Activated CD4-positive, alpha-beta T cell treated with anti-CD3 and anti-CD28 coated beads for 36 hours (primary cell): ENCODE measurements at regions of chr3 and their contacts with region 1.

Region 1: GRCh38 chr3:128969993-128970739 is 23.7 kb downstream of the CFAP92 start:
- DNase-seq: peak; percentile 80
- ATAC-seq: peak; percentile 74
- H3K4me3 Mint-ChIP-seq: no peak overlapping the region
- H3K27ac Mint-ChIP-seq: no peak overlapping the region
- H3K4me1 Mint-ChIP-seq: peaks cover 3% of the 10 kb centered on the region
- H3K27me3 Mint-ChIP-seq: no peaks in the 10 kb centered on the region

Region 2: GRCh38 chr3:127738192-127738840 is 1231.8 kb before region 1 on chr3:
- CTCF ChIA-PET with region 1: no interaction called
- POLR2A ChIA-PET with region 1: no interaction called
- intact Hi-C with region 1: no loop called
- DNase-seq: no peak
- ATAC-seq: no peak
- H3K4me3 Mint-ChIP-seq: no peak overlapping the region
- H3K27ac Mint-ChIP-seq: no peak overlapping the region
- H3K4me1 Mint-ChIP-seq: no peaks in the 10 kb centered on the region
- H3K27me3 Mint-ChIP-seq: peaks cover 4% of the 10 kb centered on the region

Region 3: DNA sequence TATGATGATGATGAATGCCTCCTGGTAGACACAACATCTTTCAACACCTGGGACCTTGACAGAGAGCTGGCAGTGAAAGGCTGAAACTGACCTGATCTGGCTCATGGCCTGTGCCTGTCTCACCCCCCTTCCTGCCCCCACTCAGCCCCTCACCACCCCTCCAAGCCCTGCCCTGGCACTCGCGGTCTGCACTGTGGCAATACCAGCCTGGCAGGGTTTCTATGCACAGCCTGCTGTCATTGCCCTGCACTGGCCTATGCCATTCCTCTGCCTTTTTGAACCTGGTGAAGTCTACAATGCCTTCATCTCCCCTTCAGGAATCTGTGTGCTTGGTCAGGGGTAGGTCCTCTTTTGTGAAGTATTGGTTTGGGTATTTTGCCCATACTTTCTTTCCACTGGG is 34.2 kb before region 1 on chr3:
- CTCF ChIA-PET with region 1: interaction called, 10 read pairs
- POLR2A ChIA-PET with region 1: no interaction called
- intact Hi-C with region 1: no loop called
- DNase-seq: no peak
- ATAC-seq: no peak
- H3K4me3 Mint-ChIP-seq: no peak overlapping the region
- H3K27ac Mint-ChIP-seq: no peak overlapping the region
- H3K4me1 Mint-ChIP-seq: no peaks in the 10 kb centered on the region
- H3K27me3 Mint-ChIP-seq: no peaks in the 10 kb centered on the region

Region 4: DNA sequence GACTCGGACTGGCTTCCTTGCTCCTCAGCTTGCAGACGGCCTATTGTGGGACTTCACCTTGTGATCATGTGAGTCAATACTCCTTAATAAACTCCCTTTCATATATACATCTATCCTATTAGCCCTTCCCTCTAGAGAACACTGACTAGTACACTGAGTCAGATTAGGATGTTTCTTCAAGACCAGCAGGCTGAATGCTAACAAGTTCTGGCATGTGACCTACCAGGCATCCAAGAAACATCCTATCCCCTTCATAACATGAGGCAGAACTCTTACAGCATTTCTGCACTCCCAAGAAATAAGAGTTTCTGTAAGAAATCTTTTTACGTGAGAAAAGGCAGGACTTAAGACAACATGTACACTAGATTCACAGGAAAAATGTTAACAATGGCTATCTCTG is 14.4 kb after region 1 on chr3:
- CTCF ChIA-PET with region 1: interaction called, 22 read pairs
- POLR2A ChIA-PET with region 1: no interaction called
- intact Hi-C with region 1: no loop called
- DNase-seq: no peak
- ATAC-seq: no peak
- H3K4me3 Mint-ChIP-seq: no peak overlapping the region
- H3K27ac Mint-ChIP-seq: no peak overlapping the region
- H3K4me1 Mint-ChIP-seq: no peaks in the 10 kb centered on the region
- H3K27me3 Mint-ChIP-seq: no peaks in the 10 kb centered on the region

Region 5: GRCh38 chr3:129003578-129004160 is 33.5 kb after region 1 on chr3:
- CTCF ChIA-PET with region 1: interaction called, 17 read pairs
- POLR2A ChIA-PET with region 1: no interaction called
- intact Hi-C with region 1: no loop called
- DNase-seq: peak; percentile 77
- ATAC-seq: peak; percentile 74
- H3K4me3 Mint-ChIP-seq: peak overlapping the region; percentile 52
- H3K27ac Mint-ChIP-seq: no peak overlapping the region
- H3K4me1 Mint-ChIP-seq: peaks cover 36% of the 10 kb centered on the region
- H3K27me3 Mint-ChIP-seq: peaks cover 27% of the 10 kb centered on the region

Region 6: GRCh38 chr3:129026728-129027543 is 56.8 kb after region 1 on chr3:
- CTCF ChIA-PET with region 1: interaction called, 20 read pairs
- POLR2A ChIA-PET with region 1: no interaction called
- intact Hi-C with region 1: no loop called
- DNase-seq: peak; percentile 96
- ATAC-seq: peak; percentile 100
- H3K4me3 Mint-ChIP-seq: peak overlapping the region; percentile 72
- H3K27ac Mint-ChIP-seq: peak overlapping the region; percentile 81
- H3K4me1 Mint-ChIP-seq: peaks cover 12% of the 10 kb centered on the region
- H3K27me3 Mint-ChIP-seq: no peaks in the 10 kb centered on the region

Region 7: DNA sequence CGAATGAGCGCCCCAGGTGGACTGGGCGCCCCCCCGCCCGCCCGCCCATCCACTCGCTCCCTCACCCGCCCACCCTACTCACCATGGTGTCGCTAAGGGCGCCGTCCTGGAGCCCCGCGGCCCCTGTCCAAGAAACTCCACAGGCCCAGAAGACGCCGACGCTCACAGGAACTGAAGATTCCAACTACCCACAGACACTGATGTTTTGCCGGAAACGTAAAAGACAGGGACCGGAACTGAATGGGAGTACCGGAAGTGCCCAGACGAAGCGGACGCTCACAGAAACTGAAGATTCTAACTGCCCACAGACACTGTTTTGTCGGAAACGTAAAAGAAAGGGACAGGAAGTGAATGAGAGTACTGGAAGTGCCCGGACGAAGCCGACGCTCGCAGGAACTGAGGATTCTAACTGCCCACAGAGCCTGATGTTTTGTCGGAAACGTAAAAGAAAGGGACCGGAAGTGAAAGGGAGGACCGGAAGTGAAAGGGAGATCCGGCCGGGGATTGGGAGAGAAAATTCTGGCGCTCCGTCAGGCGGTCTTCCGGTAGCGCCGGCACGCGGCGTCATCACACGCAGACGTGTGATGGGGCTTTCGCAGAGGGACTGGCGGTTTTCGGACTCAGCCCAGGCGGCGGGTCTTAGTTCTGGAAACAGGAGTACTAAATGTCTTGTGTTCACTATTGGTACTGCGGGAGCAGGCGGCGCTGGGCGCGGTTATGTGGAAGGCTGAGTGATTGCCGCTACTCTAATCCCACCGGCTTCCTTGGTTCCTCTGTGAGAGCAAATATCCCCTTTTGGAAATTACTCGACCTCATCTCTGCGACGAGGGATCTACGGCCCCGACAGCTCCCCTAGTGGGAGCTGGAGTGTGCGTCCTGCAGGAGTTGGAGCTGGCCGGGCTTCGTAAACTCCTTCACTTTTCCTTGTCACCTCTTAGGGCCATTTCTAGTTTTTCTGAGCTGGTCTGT is 191.0 kb after region 1 on chr3 and contains the start of gene ISY1:
- CTCF ChIA-PET with region 1: interaction called, 22 read pairs
- POLR2A ChIA-PET with region 1: no interaction called
- intact Hi-C with region 1: loop called in 1 of 2 experiments (anchors 1 kb)
- DNase-seq: peak; percentile 93
- ATAC-seq: peak; percentile 81
- H3K4me3 Mint-ChIP-seq: peak within 1 kb of the TSS; percentile 93
- H3K27ac Mint-ChIP-seq: peak within 1 kb of the TSS; percentile 98
- H3K4me1 Mint-ChIP-seq: peaks cover 30% of the 10 kb centered on the region
- H3K27me3 Mint-ChIP-seq: no peaks in the 10 kb centered on the region
- total RNA-seq, gene ISY1: 44.9 to 65.5 TPM